Mucosa of descending colon (tissue), 3 donors: ENCODE measurements at regions of chr17 and their contacts with region 1.

Region 1: DNA sequence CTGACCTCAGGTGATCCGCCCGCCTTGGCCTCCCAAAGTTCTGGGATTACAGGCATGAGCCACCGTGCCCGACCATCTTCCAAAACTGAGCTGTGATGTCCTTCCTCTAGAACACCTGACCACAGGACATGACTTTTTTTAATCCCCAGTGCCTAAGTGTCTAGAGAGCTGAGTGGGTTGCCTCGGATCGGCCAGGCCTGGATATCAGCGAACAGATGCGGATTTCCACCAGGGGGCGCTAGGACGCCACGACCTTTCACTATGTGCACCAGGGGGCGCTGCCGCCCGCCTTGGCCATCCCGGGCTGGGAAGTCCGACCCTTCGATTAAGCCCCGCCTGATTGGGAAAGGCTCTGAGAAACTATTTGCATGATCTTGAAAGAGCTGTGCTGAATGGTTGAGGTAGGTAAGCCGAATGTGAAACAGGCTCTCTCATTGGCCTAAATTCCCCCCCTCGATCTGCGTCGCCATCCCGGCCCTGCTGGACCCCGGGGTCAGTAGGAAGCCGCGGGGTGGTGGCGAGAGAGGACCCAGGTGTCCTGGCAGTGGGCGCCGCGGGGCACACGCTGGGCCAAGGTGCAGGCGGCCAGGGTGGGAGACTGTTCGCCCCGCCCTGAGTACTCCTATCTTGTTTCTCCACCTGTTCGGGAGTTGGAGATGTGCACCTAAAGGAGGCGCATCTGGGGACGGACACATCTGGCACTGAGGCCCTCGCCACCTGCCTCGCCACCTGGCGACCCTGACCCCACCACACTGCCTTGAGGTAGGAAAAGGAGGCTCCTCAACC is at the start of gene ACBD4:
- DNase-seq: peak; percentile 95 to 98 (median 97)
- ATAC-seq: peak; percentile 84
- H3K4me3 ChIP-seq: peak within 1 kb of the TSS; percentile 44
- H3K4me1 ChIP-seq: peaks cover 28% of the 10 kb centered on the region
- CTCF ChIP-seq: peak; percentile 99
- total RNA-seq, gene ACBD4: 18.1 to 28.7 (median 26.3) TPM

Region 2: DNA sequence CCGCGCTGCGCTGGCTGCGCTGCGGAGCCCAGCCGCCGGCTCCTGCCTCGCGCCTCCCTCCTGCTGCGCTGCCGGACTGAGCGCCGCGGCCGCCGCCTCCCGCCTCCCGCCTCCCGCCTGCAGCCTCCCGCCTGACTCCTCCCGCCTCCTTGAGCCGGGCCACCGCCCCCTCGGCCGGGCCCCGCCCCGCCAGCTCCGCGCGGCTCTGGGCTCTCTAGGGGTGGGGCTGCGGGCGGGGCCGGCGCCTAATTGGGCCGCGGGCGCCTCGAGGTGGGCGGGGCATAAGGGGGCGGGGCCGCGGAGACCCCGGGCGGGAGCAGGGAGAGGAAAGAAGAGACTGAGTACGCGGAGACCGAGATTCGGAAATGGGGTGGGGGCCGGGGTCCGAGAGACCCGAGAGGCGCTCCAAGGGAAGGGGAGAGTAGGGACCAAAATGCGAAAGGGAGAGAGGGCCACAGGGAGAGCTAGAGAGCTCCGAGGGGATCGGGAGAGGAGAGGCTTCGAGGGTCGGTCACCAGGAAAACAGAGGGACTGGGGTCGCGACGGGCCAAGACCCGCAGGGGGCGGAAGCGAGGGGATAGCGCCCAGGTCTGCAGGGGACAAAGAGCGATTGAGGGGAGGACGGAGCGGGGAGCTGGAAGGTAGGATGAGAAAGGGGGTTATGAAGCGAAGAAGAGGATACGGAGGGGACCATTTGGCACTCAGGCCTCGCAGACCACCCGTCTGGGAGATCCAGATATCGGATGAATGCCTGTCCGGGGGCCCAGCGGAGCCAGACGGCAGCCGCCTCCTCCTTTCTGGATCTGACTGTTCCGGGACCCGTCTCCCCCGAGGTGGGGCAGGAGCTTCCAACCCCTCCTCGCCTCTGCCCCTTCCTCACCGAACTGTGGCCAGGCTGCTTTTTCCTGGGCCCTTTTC is 166.9 kb before region 1 on chr17 and contains the start of gene C1QL1:
- intact Hi-C with region 1: no loop called
- DNase-seq: peak; percentile 91 to 95 (median 92)
- ATAC-seq: peak; percentile 99
- H3K4me3 ChIP-seq: no peak within 1 kb of the TSS
- H3K4me1 ChIP-seq: peaks cover 23% of the 10 kb centered on the region
- CTCF ChIP-seq: no peak
- total RNA-seq, gene C1QL1: 0.29 to 6.5 (median 0.60) TPM

Region 3: GRCh38 chr17:45060797-45061605 is 74.4 kb before region 1 on chr17 and contains the start of gene NMT1:
- intact Hi-C with region 1: no loop called
- DNase-seq: peak; percentile 94 to 98 (median 97)
- ATAC-seq: peak; percentile 94
- H3K4me3 ChIP-seq: peak within 1 kb of the TSS; percentile 56
- H3K4me1 ChIP-seq: peaks cover 54% of the 10 kb centered on the region
- CTCF ChIP-seq: no peak
- total RNA-seq, gene NMT1: 47.0 to 94.0 (median 76.1) TPM

Region 4: DNA sequence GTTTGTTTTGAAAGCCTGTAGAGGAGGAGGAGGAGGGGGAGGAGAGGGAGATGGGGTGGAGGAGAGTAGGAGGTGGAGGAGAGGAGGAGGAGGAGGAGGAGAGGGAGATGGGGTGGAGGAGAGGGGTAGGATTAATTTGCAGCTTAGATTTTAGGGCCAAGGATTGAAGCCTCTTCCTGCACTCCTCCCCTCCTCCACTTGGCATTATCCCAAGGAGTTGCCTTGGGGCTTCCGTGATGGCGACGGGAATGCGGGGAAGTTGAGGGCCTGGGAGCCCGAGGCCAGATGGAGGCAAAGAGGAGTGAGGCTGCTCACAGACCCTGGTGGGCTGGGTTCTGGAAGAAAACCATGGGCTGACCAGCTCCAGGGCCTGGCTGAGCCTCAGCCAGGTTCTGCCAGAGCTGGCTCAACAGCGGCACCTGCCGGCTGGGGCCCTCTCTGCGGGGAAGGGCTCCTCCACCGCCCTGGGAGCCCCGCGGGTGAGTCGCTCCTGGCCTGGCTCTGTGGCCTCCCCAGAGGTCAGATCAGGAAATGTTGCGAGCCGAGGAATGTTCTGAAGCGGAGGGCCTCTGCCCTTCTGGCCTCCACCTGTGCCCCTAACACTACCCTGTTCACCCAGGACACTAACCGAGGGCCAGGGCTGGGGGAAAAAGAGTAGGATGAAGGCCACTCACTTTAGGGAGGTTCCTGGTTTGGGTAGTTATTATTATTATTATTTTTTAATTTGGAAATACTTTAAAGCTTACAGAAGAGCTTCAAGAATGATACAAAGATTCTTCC is 62.4 kb after region 1 on chr17:
- intact Hi-C with region 1: loop called (anchors 2 to 10 kb)
- DNase-seq: peak; percentile 91 to 97 (median 93)
- ATAC-seq: peak; percentile 100
- H3K4me3 ChIP-seq: no peak overlapping the region
- H3K4me1 ChIP-seq: no peaks in the 10 kb centered on the region
- CTCF ChIP-seq: peak; percentile 99